Gastrocnemius medialis (tissue), 4 donors: ENCODE measurements at regions of chr2 and their contacts with region 1.

Region 1: DNA sequence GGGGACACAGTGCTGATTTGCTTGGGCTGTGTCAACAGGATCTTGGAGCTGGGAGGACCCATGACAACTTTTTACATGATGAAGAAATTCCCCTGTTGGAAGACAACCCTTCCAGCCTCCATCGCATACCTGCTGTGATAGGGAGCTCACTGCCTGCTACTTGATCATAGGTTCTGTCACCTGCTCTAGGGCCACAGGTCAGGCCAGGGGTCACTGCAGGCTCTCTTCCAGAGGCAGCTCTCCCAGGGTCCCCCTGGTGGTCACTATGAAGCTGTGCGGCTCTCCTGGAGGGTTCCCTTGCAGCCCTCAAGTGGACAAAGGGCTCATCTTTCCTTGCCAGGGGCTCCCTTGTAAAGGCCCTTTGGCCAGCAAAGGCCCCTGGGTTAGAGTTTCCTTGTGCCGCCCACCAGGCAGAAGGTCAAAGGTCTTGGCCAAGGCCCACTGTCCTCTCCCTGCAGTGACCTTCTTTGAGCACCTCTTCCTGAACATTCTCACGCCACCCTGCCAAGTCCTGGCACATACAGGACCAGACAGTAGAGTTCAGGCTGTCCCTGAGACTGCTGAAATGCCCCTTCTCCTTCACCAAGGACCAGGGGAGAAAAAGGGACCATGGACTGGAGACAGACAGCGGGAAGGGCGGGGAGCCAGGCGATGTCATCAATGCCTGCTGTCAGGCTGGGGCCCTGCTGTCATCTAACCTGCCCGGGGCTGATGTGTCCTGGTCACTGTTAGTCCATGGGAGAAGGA is 345.1 kb downstream of the DYSF start:
- DNase-seq: peak in 1 of 2 donors; percentile 31
- ATAC-seq: peak; percentile 37 to 58
- H3K4me3 ChIP-seq: no peak overlapping the region
- H3K27ac ChIP-seq: no peak overlapping the region
- H3K4me1 ChIP-seq: peaks cover 6 to 14% of the 10 kb centered on the region in 2 donors
- H3K27me3 ChIP-seq: no peaks in the 10 kb centered on the region
- CTCF ChIP-seq: peak; percentile 68 to 87 (median 82)
- POLR2A ChIP-seq: no peak

Region 2: GRCh38 chr2:71545572-71546274 is 252.7 kb before region 1 on chr2:
- in situ Hi-C with region 1: no loop called
- intact Hi-C with region 1: loop called (anchors 1 kb)
- DNase-seq: peak in 1 of 2 donors; percentile 44
- ATAC-seq: peak; percentile 46 to 60
- H3K4me3 ChIP-seq: peak overlapping the region in 1 of 4 donors; percentile 30
- H3K27ac ChIP-seq: peak overlapping the region in 3 of 4 donors; percentile 46 to 69 (median 69)
- H3K4me1 ChIP-seq: no peaks in the 10 kb centered on the region
- H3K27me3 ChIP-seq: no peaks in the 10 kb centered on the region
- CTCF ChIP-seq: peak; percentile 46 to 74 (median 64)
- POLR2A ChIP-seq: no peak

Region 3: DNA sequence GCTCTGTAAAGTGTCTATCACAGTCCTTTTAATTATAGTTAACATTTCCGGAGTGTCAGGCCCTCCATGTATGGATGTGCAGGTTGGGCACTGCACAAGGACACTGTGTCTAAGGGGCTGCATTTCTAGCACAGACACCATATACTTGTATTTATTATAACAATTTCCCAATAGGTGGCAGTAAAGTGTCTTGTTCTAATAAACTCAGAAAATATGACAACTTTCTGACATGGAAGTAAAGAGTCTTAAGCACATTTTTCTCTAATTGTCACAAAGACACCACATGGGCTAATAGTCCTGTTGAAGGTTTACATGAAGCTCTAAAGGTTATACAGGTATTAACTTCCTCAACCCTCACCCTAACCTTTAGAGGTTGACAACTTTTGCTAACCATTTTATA is 188.5 kb before region 1 on chr2:
- in situ Hi-C with region 1: loop called (anchors 10 to 25 kb)
- intact Hi-C with region 1: loop called (anchors 1 kb)
- DNase-seq: no peak
- ATAC-seq: peak; percentile 38 to 50
- H3K4me3 ChIP-seq: no peak overlapping the region
- H3K27ac ChIP-seq: peak overlapping the region; percentile 5 to 45 (median 15)
- H3K4me1 ChIP-seq: peaks cover 16% of the 10 kb centered on the region in 2 donors
- H3K27me3 ChIP-seq: no peaks in the 10 kb centered on the region
- CTCF ChIP-seq: peak in 2 of 5 experiments; percentile 27 to 29
- POLR2A ChIP-seq: no peak

Region 4: DNA sequence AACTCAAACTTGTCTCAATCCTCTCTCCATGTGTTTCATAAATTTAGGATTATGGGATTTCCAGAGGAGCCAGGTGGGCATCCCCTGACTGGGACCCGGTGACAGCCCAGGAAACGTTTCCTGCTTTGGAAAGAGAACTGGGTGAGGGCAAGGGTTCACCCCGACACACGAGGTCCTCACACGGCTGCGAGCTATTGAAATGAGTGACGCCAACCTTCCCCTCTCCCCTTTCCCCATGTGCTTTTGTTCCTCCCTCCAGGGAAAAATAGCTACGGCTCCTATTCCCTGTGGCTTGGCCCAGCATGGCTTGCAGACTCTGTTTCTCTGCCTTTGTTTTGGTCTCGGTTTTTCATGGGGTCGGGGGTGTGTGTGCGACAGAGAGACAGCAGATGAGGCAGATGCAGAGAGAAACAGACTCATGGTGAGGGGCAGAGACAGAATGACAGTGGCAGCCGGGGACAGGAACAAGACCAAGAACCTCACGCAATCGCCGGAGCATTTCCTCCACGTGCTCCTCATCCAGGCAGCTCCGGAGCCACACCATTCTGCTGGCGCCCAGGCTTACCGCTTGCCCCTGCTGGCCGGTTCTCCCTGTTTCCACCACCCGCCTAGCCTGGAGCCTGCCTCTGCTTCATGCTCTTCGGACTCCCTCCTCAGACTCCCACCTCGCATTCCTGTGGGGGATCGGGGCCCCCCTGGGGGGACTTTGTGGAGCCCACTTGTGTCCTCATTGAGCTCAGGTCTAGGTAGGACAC is 106.5 kb before region 1 on chr2:
- in situ Hi-C with region 1: no loop called
- intact Hi-C with region 1: loop called (anchors 2 kb)
- DNase-seq: peak; percentile 85 to 88
- ATAC-seq: peak; percentile 83 to 89
- H3K4me3 ChIP-seq: peak overlapping the region in 1 of 4 donors; percentile 13
- H3K27ac ChIP-seq: peak overlapping the region; percentile 85 to 92 (median 90)
- H3K4me1 ChIP-seq: peaks cover 27 to 46% of the 10 kb centered on the region in 2 donors
- H3K27me3 ChIP-seq: no peaks in the 10 kb centered on the region
- CTCF ChIP-seq: peak in 4 of 5 experiments; percentile 25 to 38 (median 28)
- POLR2A ChIP-seq: peak; percentile 54 to 64

Region 5: DNA sequence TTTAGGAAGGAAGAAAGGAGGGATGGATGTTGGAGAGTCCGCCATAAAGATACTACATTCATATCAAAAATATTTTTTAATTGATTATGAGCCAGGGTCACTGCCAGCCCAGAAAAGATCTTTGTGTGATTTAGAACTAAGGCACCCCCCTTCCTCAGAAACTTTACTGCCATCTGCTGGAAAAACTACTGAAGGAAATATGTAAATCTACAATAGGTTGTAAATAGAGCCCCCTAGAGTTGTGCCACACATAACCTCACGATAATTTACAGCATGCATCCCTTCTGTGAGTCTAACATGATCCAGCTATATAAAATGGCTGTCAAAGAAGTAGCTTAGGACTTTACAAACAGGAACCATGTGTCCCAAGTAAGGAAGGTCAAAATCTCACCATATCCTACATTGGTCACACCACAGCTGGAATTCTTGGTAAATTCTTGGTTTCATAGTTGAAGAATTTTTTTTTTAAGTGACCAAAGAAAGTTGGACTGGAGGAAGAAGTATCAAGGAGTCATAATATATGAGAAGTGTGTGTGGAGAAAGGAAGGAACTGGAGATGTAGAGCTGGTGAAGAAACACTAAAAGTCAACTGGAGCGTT is 196.7 kb after region 1 on chr2:
- in situ Hi-C with region 1: loop called in 2 of 4 experiments (anchors 10 kb)
- intact Hi-C with region 1: loop called (anchors 1 kb)
- DNase-seq: no peak
- ATAC-seq: peak; percentile 23 to 82
- H3K4me3 ChIP-seq: no peak overlapping the region
- H3K27ac ChIP-seq: no peak overlapping the region
- H3K4me1 ChIP-seq: no peaks in the 10 kb centered on the region
- H3K27me3 ChIP-seq: no peaks in the 10 kb centered on the region
- CTCF ChIP-seq: peak; percentile 63 to 79 (median 69)
- POLR2A ChIP-seq: no peak

Region 6: GRCh38 chr2:72579591-72580180 is 781.2 kb after region 1 on chr2:
- in situ Hi-C with region 1: loop called in 1 of 4 experiments (anchors 25 kb)
- intact Hi-C with region 1: no loop called
- DNase-seq: no peak
- ATAC-seq: peak in 1 of 2 donors; percentile 71
- H3K4me3 ChIP-seq: no peak overlapping the region
- H3K27ac ChIP-seq: no peak overlapping the region
- H3K4me1 ChIP-seq: peaks cover 0 to 9% of the 10 kb centered on the region in 2 donors
- H3K27me3 ChIP-seq: no peaks in the 10 kb centered on the region
- CTCF ChIP-seq: peak in 4 of 5 experiments; percentile 50 to 70 (median 59)
- POLR2A ChIP-seq: no peak